GM13977 (cell line): ENCODE measurements at regions of chr12 and their contacts with region 1.

Region 1: GRCh38 chr12:38906482-38907170 is 1.2 kb upstream of the CPNE8 start:
- DNase-seq: peak; percentile 70
- CTCF ChIP-seq: peak; percentile 94

Region 2: GRCh38 chr12:38771871-38772270 is 134.8 kb before region 1 on chr12:
- in situ Hi-C with region 1: loop called (anchors 10 kb)
- DNase-seq: peak; percentile 27
- CTCF ChIP-seq: no peak

Region 3: DNA sequence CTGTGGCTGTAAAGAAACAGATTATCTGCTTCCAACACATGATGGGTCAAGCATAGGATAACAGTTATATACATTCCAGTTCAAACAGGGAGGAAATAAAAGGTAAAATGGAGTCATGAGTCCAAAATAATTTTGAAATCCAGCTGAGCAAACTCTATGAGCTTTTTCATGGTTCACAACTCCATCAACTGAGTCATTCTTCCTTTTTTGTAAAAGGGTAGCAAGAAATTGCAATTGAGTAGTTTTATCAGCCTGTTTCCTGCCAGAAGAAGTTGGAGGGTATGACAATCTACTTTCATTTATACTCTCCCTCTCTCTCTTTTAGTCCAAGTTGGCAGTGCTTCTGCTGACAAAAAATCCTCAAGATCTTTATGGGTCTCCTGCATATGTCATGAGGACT is 96.8 kb before region 1 on chr12:
- in situ Hi-C with region 1: no loop called
- DNase-seq: no peak
- CTCF ChIP-seq: no peak

Region 4: DNA sequence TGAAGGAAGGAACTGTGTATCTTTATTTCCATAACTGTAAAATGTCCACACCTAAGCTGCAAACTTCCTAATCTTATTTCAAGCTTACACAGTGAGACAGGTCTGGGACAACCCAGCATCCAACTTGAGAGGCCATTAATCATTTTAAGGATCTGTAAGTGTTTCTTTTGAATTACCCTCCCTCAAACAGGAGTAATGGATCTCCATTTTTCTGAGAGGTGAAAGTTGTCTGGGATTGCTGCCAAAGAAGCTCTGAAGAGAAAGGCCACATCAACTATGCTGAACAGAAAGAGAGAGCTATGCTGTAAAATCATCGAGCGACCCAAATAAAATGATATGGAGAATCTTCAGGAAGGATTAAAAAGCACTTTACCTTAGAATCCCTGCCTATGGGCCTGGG is 130.5 kb after region 1 on chr12:
- in situ Hi-C with region 1: no loop called
- DNase-seq: no peak
- CTCF ChIP-seq: no peak